CD8-positive, alpha-beta memory T cell (primary cell): ENCODE measurements at regions of chr11 and their contacts with region 1.

Region 1: GRCh38 chr11:64317957-64318693 is at the start of gene PRDX5:
- DNase-seq: peak; percentile 92 to 98 (median 97)
- H3K4me3 ChIP-seq: peak within 1 kb of the TSS; percentile 93
- H3K4me3 Mint-ChIP-seq: peak within 1 kb of the TSS; percentile 89 to 97 (median 94)
- H3K27ac ChIP-seq: peak within 1 kb of the TSS; percentile 97
- H3K27ac Mint-ChIP-seq: peak within 1 kb of the TSS; percentile 98 to 100 (median 99)
- H3K4me1 ChIP-seq: peaks cover 14% of the 10 kb centered on the region
- H3K4me1 Mint-ChIP-seq: peaks cover 29 to 43% (median 31%) of the 10 kb centered on the region in 3 donors
- H3K27me3 ChIP-seq: no peaks in the 10 kb centered on the region
- H3K27me3 Mint-ChIP-seq: peaks cover 0 to 7% of the 10 kb centered on the region in 2 donors
- total RNA-seq, gene PRDX5: 114 to 126 TPM

Region 2: DNA sequence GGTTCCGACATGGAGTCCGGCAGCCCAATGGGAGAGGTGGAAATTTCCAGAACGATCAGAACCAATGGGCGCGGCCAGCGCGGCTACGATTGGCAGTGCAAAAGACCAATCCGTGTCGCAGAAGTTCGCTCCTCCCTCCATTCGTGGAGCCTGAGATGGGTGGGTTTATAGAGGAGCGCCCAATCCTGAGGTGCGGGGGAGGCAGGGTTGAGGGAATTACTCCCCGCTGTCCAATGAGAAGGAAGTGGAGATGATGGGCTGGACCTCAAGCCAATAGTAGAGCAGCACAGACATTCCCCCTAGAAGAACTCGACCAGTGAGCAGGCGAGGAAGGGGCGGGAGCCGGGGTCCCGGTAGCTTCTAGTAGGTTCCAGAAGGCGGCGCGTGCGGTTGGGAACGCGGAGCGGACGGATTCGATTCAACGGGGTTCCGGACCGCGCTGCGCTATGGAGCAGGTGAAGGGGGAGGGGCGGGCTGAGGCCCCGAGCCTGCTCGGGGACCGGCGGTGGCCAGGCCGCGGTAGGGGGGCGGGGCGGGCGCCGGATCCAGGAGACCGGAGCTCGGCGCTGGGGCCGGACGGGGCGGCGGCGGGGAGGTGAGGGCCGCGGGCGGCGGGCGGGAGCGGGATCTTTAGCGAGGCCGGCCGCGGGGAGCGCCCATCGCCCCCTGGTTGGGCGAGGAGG is 132.2 kb before region 1 on chr11 and contains the start of gene STIP1:
- CTCF ChIA-PET with region 1: interaction called, 4 read pairs
- POLR2A ChIA-PET with region 1: interaction called, 16 read pairs
- DNase-seq: peak; percentile 96 to 100 (median 99)
- H3K4me3 ChIP-seq: peak within 1 kb of the TSS; percentile 76
- H3K4me3 Mint-ChIP-seq: peak within 1 kb of the TSS in 5 of 7 donors; percentile 89 to 100 (median 94)
- H3K27ac ChIP-seq: peak within 1 kb of the TSS; percentile 76
- H3K27ac Mint-ChIP-seq: peak within 1 kb of the TSS; percentile 83 to 99 (median 96)
- H3K4me1 ChIP-seq: peaks cover 31% of the 10 kb centered on the region
- H3K4me1 Mint-ChIP-seq: peaks cover 28 to 48% (median 32%) of the 10 kb centered on the region in 3 donors
- H3K27me3 ChIP-seq: no peaks in the 10 kb centered on the region
- H3K27me3 Mint-ChIP-seq: peaks cover 0 to 5% of the 10 kb centered on the region in 2 donors
- total RNA-seq, gene STIP1: 457 to 461 TPM

Region 3: GRCh38 chr11:64269380-64270234 is 48.5 kb before region 1 on chr11:
- CTCF ChIA-PET with region 1: interaction called, 13 read pairs
- POLR2A ChIA-PET with region 1: interaction called, 33 read pairs
- DNase-seq: peak; percentile 95 to 98 (median 98)
- H3K4me3 ChIP-seq: peak overlapping the region; percentile 96
- H3K4me3 Mint-ChIP-seq: peak overlapping the region; percentile 93 to 99 (median 98)
- H3K27ac ChIP-seq: peak overlapping the region; percentile 86
- H3K27ac Mint-ChIP-seq: peak overlapping the region; percentile 96 to 99 (median 98)
- H3K4me1 ChIP-seq: peaks cover 22% of the 10 kb centered on the region
- H3K4me1 Mint-ChIP-seq: peaks cover 19 to 28% (median 20%) of the 10 kb centered on the region in 3 donors
- H3K27me3 ChIP-seq: no peaks in the 10 kb centered on the region
- H3K27me3 Mint-ChIP-seq: peaks cover 0 to 3% of the 10 kb centered on the region in 2 donors

Region 4: GRCh38 chr11:64304316-64305072 is 13.6 kb before region 1 on chr11:
- CTCF ChIA-PET with region 1: interaction called, 34 read pairs
- POLR2A ChIA-PET with region 1: interaction called, 42 read pairs
- DNase-seq: peak; percentile 85 to 94 (median 90)
- H3K4me3 ChIP-seq: peak overlapping the region; percentile 92
- H3K4me3 Mint-ChIP-seq: peak overlapping the region; percentile 90 to 96 (median 94)
- H3K27ac ChIP-seq: peak overlapping the region; percentile 89
- H3K27ac Mint-ChIP-seq: peak overlapping the region; percentile 95 to 98 (median 97)
- H3K4me1 ChIP-seq: peaks cover 35% of the 10 kb centered on the region
- H3K4me1 Mint-ChIP-seq: peaks cover 32 to 49% (median 32%) of the 10 kb centered on the region in 3 donors
- H3K27me3 ChIP-seq: peaks cover 22% of the 10 kb centered on the region
- H3K27me3 Mint-ChIP-seq: peaks cover 19 to 20% of the 10 kb centered on the region in 2 donors

Region 5: DNA sequence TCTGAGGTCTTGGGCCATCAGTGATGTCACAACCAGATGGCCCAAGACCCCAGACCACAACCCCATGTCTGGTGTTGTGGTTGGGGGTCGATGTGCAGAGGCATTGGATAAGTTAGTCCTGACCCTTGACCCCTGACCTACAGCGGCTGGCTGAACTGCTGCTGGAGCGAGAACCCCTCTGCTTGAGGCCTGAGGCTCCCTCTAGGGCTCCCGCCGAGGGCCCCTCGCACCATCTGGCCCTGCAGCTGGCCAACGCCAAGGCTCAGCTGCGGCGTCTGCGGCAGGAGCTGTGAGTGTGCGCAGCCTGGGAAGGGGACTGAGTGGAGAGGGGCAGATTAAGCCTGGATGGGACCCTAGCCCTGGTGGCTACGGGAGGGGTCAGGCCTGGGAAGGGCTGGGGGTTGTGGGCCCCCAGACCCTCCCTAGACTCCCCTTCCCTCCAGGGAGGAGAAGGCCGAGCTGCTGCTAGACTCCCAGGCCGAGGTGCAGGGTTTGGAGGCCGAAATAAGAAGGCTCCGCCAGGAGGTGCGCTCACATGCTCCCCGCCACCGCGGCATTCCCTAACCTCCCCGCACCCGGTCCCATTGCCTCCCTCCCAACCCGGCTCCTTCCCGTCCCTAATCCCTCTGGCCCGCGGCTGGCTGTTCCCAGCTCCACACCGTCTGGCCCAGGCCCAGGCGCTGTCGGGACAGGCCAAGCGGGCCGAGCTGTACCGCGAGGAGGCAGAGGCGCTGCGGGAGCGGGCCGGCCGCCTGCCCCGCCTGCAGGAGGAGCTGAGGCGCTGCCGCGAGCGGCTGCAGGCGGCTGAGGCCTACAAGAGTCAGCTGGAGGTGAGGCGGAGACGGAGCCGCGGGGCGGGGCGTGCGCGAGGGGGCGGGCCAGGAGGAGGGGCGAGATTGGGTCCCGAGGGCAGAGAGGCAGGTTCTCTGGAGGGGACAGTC is 24.0 kb after region 1 on chr11:
- CTCF ChIA-PET with region 1: interaction called, 42 read pairs
- POLR2A ChIA-PET with region 1: interaction called, 28 read pairs
- DNase-seq: peak; percentile 81 to 87 (median 85)
- H3K4me3 ChIP-seq: peak overlapping the region; percentile 15
- H3K4me3 Mint-ChIP-seq: peak overlapping the region in 6 of 7 donors; percentile 27 to 87 (median 58)
- H3K27ac ChIP-seq: peak overlapping the region; percentile 54
- H3K27ac Mint-ChIP-seq: peak overlapping the region in 5 of 8 donors; percentile 23 to 79 (median 74)
- H3K4me1 ChIP-seq: peaks cover 32% of the 10 kb centered on the region
- H3K4me1 Mint-ChIP-seq: peaks cover 34 to 59% (median 37%) of the 10 kb centered on the region in 3 donors
- H3K27me3 ChIP-seq: no peaks in the 10 kb centered on the region
- H3K27me3 Mint-ChIP-seq: peaks cover 0 to 2% of the 10 kb centered on the region in 2 donors

Region 6: GRCh38 chr11:64778508-64779346 is 460.6 kb after region 1 on chr11 and contains the start of gene SF1:
- CTCF ChIA-PET with region 1: no interaction called
- POLR2A ChIA-PET with region 1: interaction called, 13 read pairs
- DNase-seq: peak; percentile 98 to 100 (median 100)
- H3K4me3 ChIP-seq: peak within 1 kb of the TSS; percentile 99
- H3K4me3 Mint-ChIP-seq: peak within 1 kb of the TSS; percentile 90 to 96 (median 95)
- H3K27ac ChIP-seq: peak within 1 kb of the TSS; percentile 98
- H3K27ac Mint-ChIP-seq: peak within 1 kb of the TSS; percentile 97 to 100 (median 99)
- H3K4me1 ChIP-seq: peaks cover 52% of the 10 kb centered on the region
- H3K4me1 Mint-ChIP-seq: peaks cover 58 to 64% (median 63%) of the 10 kb centered on the region in 3 donors
- H3K27me3 ChIP-seq: no peaks in the 10 kb centered on the region
- H3K27me3 Mint-ChIP-seq: peaks cover 0 to 7% of the 10 kb centered on the region in 2 donors
- total RNA-seq, gene SF1: 403 to 423 TPM